ENCODE measurements at regions of chr7 and their contacts with region 1.

Region 1: DNA sequence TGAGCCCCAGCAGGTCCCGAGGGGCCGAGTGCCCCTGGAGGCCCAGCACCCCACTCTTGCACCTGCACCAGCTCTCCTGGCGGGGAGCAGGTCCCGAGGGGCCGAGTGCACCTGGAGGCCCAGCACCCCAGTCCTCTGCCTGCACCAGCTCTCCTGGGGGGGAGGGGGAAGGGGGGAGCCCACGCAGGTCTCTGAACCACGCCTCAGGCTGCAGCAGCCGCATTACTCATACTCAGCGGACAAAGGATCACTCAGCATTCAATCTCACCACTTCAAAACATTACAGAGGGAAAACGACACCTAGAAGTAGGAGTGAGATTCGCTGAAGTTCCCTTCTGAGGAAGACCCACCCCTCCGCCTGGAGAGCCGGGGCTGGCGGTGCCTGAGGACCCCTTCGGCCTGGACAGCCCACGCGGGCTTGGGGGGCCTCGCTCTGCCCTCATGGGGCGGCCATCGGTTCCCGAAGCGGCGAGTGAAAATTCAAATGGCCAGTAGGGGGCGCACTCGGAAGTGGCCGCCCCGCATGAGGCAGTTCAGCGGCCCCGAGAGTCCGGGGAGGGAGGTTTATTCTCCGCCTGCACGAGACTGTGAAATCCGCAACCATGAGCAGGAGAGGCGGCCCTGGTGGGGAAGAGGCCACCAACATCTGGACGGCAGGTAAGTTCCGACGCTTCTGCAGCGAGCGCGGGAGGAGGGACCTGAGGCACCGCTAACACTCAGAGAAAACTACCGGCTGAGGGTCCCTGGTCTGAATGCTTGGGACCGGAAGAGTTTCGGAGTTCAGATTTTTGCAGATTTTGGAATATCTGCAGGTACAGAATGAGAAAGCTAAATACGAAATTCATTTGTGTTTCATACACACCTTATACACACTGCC is 1.1 kb upstream of the GPER1 start:
- DNase-seq: peak; percentile 90
- ATAC-seq: peak; percentile 83

Region 2: GRCh38 chr7:1065263-1066260 is 21.3 kb before region 1 on chr7:
- intact Hi-C with region 1: no loop called
- DNase-seq: peak; percentile 91
- ATAC-seq: peak; percentile 93

Region 3: DNA sequence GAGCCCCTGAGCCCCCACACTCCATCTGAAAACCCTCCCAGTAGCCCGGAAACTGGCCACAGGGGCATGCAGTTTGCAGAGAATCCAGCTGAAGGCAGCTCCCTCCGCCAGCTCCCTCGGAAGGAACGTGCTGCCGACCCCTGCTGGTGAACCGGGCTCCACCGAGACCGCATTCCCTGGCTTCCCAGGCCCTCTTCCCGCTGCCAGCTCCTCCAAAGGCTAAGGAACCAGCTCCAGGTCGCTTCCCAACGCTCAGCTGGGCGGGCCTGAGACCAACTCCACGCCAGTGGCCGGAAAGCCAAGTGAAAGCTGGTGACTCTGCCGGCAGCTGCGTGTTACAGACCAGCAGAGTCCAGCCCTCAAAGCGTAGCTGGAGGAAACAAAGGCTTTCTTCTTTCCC is 36.9 kb after region 1 on chr7:
- intact Hi-C with region 1: loop called (anchors 5 kb)
- DNase-seq: peak; percentile 90
- ATAC-seq: peak; percentile 96

Measured in sciatic nerve (tissue), 2 donors.